ENCODE measurements at regions of chr16 and their contacts with region 1.

Region 1: DNA sequence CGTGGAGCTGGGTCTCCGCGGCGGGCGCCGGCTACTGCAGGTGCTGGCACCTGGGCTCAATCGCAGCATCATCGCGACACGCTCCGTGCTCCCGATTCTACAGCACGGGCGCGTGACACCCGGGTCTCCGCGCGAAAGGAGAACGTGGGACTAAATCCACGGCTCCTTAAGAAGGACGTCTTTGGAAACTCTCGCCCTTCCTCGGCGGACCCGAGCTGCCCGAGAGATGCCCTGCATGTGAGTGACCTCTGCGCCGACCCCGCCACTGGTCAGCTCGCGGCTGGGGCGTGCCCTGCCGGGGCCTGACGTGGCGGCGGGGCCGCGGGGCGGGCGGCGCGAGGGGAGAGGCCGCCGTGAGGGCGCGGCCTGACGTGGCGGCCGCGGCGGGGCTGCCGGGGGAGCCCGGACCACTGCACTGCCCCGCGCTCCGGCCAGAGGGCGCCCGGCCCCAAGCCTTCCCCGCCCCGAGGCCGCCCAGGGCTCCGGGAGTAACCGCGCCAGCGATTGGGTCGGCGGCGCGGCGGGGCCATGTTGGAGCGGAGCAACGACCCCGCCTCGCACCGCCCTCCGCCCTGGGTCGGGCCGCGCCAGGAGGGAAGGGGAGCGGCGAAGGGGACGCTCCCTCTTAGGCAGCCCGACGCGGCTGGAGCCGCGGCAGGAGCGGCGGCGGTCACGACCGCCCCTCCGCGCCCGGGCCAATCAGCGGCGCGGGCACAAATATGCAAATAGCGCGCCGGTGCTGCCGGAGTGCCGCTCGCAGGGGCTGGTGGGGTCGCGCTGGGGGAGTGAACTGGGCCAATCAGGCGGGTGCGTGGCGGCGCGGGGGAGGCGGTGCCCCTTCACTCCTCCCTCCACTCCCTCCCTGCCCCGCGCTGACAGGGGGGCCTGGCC is 75.6 kb downstream of the CHD9 start:
- DNase-seq: peak; percentile 96 to 98
- ATAC-seq: peak; percentile 81

Region 2: GRCh38 chr16:53054670-53055485 is 75.5 kb before region 1 on chr16 and contains the start of gene CHD9:
- intact Hi-C with region 1: loop called in 1 of 2 experiments (anchors 10 kb)
- DNase-seq: peak; percentile 81 to 88
- ATAC-seq: peak; percentile 77
- total RNA-seq, gene CHD9: 68.6 to 73.7 TPM

Region 3: DNA sequence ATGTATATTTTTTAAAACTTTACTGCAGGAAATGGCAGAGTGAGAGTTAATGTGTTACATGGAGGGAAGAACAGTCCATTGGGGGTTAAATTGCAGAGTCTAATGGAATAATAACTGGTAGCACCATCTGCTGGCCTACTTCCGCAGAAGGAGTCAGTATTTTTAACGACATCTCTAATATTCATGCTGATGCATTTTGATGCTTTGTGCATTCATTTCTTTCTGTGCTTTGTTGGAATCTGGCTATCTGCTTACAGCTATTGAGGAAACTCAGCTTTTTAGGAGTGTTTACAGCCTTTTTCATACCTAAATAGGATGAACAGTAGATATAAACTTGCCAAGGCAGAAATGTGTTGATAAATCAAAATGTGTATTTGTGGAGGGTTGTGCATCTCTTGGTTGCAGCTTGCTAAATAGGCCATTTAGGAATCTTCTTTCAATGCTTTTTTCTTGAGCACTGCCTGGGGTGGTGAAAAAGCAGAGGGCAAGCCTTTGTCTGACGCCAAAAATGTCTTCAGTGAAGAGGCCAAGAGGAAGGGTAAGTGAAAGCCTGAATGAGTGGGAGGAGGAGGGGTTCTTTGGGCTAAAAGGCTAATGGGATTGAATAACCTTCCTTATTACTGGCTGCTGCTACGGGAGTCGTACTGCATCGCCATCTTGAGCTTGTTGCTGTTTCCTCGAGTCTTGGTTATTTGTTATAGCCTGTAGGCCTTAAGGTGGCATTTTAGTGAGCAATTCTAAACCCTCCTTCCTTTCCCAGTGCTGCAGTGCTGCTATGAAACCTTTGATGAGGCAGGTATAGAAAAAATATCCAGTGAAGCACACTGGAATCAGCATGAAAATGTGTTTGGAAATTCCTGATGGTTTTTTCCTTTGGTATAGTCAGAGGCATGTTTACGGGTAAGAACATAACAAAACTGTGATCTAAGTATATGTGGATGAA is 77.7 kb after region 1 on chr16:
- intact Hi-C with region 1: loop called in 1 of 2 experiments (anchors 5 kb)
- DNase-seq: peak; percentile 39 to 48
- ATAC-seq: peak; percentile 93

Measured in left colon (tissue), 2 donors.